Mammary epithelial cell (primary cell): ENCODE measurements at regions of chr6 and their contacts with region 1.

Region 1: DNA sequence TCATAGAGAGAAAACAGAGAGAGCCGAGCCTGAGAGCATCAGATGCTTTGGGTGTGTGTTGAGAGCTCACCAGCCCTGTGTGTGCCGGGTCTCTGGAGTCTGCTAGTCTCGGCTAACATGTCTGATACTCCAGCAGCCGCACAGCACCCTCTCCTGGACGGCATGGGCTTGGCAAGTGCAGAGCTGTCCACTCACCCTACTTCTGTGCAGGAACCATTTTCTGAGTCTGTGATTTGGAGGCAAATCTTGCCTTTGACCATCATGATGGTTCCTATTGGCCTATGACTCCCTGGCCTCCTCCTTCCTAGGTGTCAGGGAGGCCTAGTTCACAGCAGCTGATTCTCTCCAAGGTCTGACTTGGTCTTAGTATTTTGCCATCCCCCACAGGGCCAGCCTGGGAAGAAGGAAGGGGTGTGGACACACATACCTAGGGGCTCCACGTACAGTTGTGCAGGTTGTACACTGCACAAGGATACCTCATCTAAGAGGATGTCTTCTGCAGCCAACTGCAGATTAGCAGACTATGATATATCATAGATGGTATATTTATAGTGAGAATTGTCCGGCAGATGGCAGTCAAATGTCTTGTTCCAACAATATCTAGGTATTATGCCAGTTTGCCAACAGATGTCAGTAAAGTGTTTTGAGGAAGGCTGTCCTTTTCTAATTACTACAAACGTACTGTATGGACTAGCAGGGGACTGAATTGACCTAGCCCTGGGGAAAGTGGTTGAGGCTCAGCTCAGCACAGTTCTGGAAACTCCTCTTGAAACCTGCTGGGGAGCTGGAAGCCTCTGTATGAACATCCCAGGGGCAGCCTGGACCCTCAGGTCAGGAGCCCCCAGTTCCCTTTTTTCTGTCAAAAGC is 13.0 kb downstream of the FGD2 start:
- DNase-seq: peak; percentile 74
- H3K4me3 ChIP-seq: no peak overlapping the region
- H3K27ac ChIP-seq: no peak overlapping the region
- H3K4me1 ChIP-seq: peaks cover 37% of the 10 kb centered on the region
- H3K27me3 ChIP-seq: no peaks in the 10 kb centered on the region
- CTCF ChIP-seq: peak; percentile 93 to 97

Region 2: DNA sequence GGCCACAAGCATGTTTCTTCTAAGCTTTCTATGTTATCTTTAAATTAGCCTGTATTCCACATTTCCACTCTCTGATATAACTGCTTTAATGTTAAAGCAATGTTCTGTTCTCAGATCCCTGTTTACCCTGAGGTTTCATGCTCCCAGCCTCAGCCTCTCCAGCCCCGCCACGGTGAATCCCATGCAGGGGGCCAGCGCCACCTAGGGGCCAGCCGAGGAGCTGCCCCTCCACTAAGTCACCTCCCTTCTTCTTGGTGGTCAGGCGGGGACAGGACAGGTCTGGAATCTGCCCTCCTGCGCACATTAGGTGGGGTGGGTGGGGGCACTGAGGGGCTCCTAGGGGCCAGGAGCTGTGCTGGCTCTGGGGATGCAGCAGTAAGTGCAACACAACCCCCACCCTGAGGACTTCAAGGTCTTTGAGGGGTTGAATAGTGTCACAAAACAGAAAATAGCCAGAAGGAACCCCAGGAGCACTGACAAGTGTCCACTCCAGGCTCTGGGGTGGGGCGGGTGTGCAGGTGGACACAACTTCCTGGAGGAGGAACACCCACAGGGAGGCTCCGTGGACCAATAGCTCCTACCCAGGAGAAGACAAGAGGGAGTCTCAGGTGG is 259.2 kb before region 1 on chr6:
- CTCF ChIA-PET with region 1: interaction called, 3 read pairs
- dilution Hi-C with region 1: loop called (anchors 5 kb)
- in situ Hi-C with region 1: no loop called
- intact Hi-C with region 1: no loop called
- DNase-seq: peak; percentile 58
- H3K4me3 ChIP-seq: no peak overlapping the region
- H3K27ac ChIP-seq: no peak overlapping the region
- H3K4me1 ChIP-seq: peaks cover 4% of the 10 kb centered on the region
- H3K27me3 ChIP-seq: no peaks in the 10 kb centered on the region
- CTCF ChIP-seq: peak; percentile 93 to 98

Region 3: DNA sequence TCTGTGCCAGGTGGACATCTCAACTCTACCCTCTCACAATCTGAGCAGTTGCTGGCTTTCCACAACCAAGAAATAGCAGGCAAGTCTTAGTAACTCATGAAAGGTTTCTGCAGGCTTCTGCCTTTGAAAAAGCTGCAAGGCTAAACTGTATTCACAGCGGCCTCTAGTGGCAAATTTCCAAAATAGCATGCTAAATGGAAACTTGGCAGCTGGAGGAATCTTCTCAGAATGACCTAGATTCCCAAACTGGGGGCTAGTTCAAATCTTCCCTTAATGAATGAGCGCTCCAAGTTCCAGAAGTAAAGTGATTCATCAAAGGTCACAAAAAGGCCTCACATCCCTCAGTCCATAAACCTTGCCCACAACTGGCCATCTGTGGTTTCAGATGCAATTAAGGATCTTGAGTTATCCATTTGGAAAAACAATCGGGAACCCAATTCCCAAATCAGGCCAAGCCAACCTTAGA is 167.2 kb before region 1 on chr6:
- CTCF ChIA-PET with region 1: interaction called, 7 read pairs
- dilution Hi-C with region 1: no loop called
- in situ Hi-C with region 1: no loop called
- intact Hi-C with region 1: loop called (anchors 1 kb)
- DNase-seq: peak; percentile 58
- H3K4me3 ChIP-seq: no peak overlapping the region
- H3K27ac ChIP-seq: no peak overlapping the region
- H3K4me1 ChIP-seq: peaks cover 28% of the 10 kb centered on the region
- H3K27me3 ChIP-seq: no peaks in the 10 kb centered on the region
- CTCF ChIP-seq: peak; percentile 83 to 85

Region 4: GRCh38 chr6:36912586-36912985 is 105.8 kb before region 1 on chr6:
- CTCF ChIA-PET with region 1: no interaction called
- dilution Hi-C with region 1: loop called (anchors 5 kb)
- in situ Hi-C with region 1: no loop called
- intact Hi-C with region 1: loop called (anchors 1 kb)
- DNase-seq: peak; percentile 98
- H3K4me3 ChIP-seq: no peak overlapping the region
- H3K27ac ChIP-seq: no peak overlapping the region
- H3K4me1 ChIP-seq: peaks cover 28% of the 10 kb centered on the region
- H3K27me3 ChIP-seq: peaks cover 3% of the 10 kb centered on the region
- CTCF ChIP-seq: peak in 1 of 2 donors; percentile 17

Region 5: DNA sequence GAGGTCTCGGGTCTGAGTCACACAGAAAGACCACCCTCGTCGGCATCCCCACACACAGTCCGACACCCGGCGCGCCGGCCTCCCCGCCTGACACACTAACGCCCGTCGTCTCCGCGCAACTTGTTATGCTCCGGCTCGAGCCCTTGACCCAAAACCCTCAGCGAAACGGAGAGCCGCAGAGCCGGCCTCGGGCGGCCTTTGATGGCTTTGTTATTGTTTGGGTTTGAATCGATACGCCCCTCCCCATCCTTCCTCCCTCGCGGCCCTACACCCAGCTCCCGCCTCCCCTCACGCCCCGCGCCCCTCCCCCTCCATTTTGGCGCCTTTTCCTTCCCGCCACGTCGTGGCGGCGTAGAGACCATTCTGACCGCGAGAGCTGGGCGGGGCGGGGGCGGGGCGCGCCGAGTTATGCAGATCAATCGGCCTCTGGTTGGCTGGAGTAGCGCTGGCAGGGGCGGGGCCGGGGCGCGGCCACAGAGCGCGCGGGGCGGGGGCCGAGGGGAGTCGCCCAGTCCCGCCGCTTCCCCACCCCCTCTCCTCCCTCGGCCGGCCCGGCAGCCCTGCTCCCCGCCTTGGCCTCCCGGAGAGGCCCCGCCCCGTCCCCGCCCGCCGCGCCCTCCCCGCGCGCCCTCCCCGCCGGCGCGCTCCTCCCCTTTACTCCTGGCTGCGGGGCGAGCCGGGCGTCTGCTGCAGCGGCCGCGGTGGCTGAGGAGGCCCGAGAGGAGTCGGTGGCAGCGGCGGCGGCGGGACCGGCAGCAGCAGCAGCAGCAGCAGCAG is 151.3 kb after region 1 on chr6 and contains the start of gene PIM1:
- CTCF ChIA-PET with region 1: interaction called, 5 read pairs
- dilution Hi-C with region 1: no loop called
- in situ Hi-C with region 1: loop called (anchors 10 kb)
- intact Hi-C with region 1: loop called (anchors 1 kb)
- DNase-seq: peak; percentile 96
- H3K4me3 ChIP-seq: peak within 1 kb of the TSS; percentile 94 to 98 (median 98)
- H3K27ac ChIP-seq: peak within 1 kb of the TSS; percentile 87
- H3K4me1 ChIP-seq: peaks cover 22% of the 10 kb centered on the region
- H3K27me3 ChIP-seq: no peaks in the 10 kb centered on the region
- CTCF ChIP-seq: no peak
- total RNA-seq, gene PIM1: 4.7 to 29.6 TPM

Region 6: DNA sequence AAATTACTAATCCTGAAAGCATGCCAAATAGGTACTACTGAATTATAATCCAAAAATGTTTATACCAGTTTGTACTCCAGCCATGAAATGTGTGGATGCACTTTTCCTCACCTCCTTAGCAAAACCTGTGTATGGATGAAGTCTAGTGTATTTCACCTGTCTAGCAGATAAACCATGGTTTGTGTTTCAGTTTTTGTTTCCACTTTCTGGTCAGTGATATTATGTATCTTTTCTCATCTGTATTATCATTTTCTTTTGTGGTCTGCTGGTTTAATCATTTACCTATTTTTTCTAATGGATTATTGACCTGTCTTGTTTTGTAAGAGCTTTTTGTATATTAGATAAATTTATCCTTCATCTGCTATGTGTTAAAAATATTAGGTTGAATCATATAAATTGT is 280.5 kb after region 1 on chr6:
- CTCF ChIA-PET with region 1: interaction called, 28 read pairs
- dilution Hi-C with region 1: no loop called
- in situ Hi-C with region 1: no loop called
- intact Hi-C with region 1: no loop called
- DNase-seq: no peak
- H3K4me3 ChIP-seq: no peak overlapping the region
- H3K27ac ChIP-seq: no peak overlapping the region
- H3K4me1 ChIP-seq: no peaks in the 10 kb centered on the region
- H3K27me3 ChIP-seq: no peaks in the 10 kb centered on the region
- CTCF ChIP-seq: no peak

Region 7: DNA sequence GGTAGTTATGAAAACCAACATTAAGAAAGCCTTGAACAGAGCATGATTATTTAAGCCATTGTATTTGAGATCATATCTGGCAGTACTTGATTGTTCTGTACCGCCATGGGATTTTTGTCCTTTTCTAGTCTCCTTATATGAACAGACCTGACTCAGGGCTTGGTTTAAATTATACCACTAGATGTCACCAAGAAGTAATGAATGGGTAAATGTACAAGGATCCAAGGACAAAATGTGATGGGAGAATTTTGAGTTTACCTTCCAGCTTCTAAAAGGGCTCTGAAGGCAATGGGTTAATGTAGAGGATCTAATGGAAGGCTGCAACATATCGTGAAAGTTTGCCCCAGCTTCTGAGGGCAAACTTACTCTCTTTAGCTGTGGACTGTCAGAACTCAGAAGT is 347.3 kb after region 1 on chr6:
- CTCF ChIA-PET with region 1: no interaction called
- dilution Hi-C with region 1: no loop called
- in situ Hi-C with region 1: no loop called
- intact Hi-C with region 1: no loop called
- DNase-seq: no peak
- H3K4me3 ChIP-seq: no peak overlapping the region
- H3K27ac ChIP-seq: no peak overlapping the region
- H3K4me1 ChIP-seq: no peaks in the 10 kb centered on the region
- H3K27me3 ChIP-seq: no peaks in the 10 kb centered on the region
- CTCF ChIP-seq: peak; percentile 2 to 29